ENCODE measurements at regions of chr1 and their contacts with region 1.

Region 1: DNA sequence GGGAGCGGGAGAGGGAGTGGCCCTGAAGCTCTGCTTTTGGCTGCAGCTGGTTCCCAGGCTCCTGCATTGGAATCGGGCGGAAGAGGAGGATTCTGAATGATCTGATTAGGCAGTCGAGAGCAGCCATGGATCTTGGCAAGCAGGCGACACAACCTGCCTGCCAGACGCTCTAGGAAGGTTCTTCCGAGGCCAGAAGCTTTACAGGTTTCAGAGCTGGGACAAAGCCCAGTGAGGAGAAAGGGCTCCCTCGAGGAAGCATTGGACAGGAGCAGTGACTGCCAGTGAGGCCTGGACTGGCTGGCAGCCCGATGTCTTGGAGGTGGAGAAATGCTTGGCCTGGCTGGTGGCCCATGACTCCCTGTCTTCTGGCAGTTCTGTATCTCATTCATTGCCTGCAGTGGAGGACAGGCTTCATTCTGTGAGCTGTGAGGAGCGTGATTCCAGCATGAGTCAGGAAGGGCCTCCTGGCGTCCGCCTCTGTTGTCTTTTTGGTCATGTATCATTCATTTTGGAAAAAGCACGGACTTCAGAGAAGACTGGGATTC is 132.7 kb upstream of the IPO9 start:
- DNase-seq: peak; percentile 76
- H3K4me3 ChIP-seq: no peak overlapping the region
- H3K27ac ChIP-seq: peak overlapping the region; percentile 97
- H3K4me1 ChIP-seq: peaks cover 56 to 67% of the 10 kb centered on the region in 2 experiments
- H3K27me3 ChIP-seq: no peaks in the 10 kb centered on the region
- CTCF ChIP-seq: no peak
- EP300 ChIP-seq: peak; percentile 66 to 70; a peak in 2 of 4 replicates
- RAD21 ChIP-seq: no peak

Region 2: DNA sequence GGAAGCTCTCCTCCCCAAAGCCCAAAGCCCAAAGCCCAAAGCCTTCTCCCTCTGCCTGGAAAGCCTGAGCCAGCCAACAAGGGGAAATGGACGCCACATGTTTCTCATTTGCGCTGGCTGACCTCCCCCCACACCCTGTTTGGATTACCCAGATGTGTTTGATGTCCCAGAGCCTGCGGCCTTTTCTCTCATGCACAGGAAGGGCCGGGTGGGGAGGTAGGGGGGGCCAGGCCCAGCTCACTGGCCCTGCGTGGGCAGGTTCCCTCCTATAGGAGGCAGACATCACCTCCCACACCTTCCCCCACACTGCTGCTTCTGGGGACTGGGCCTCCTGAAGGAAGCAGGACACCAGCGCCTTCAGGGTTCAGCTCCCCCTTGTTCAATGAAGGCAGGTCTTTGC is 41.0 kb before region 1 on chr1:
- CTCF ChIA-PET with region 1: interaction called, 20 read pairs
- POLR2A ChIA-PET with region 1: interaction called, 8 read pairs
- DNase-seq: peak; percentile 95
- H3K4me3 ChIP-seq: no peak overlapping the region; a peak in 1 of 4 replicates
- H3K27ac ChIP-seq: peak overlapping the region; percentile 63 to 94
- H3K4me1 ChIP-seq: peaks cover 58 to 61% of the 10 kb centered on the region in 2 experiments
- H3K27me3 ChIP-seq: no peaks in the 10 kb centered on the region
- CTCF ChIP-seq: peak; percentile 38
- EP300 ChIP-seq: peak; percentile 41 to 89; a peak in 3 of 4 replicates
- RAD21 ChIP-seq: peak; percentile 51

Region 3: DNA sequence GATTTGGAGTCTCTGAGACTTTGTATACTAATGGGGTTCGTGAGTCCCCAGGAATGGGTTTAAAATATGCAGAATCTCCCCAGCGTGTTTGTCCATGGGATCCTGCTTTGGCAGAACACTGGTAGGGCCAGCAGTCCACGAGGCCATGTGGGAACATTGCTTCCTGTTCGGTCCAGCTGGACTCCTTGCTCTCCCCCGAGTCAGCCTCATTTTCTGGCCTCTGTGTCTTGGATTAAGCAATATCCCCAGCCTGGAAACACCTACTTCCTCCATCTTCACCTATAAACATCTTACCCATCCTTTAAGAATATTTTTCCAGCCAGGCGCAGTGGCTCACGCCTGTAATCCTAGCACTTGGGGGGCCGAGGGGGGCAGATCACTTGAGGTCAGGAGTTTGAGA is 14.9 kb before region 1 on chr1:
- CTCF ChIA-PET with region 1: no interaction called
- POLR2A ChIA-PET with region 1: no interaction called
- DNase-seq: no peak
- H3K4me3 ChIP-seq: no peak overlapping the region
- H3K27ac ChIP-seq: no peak overlapping the region
- H3K4me1 ChIP-seq: peaks cover 8 to 18% of the 10 kb centered on the region in 2 experiments; a peak in 3 of 4 replicates
- H3K27me3 ChIP-seq: no peaks in the 10 kb centered on the region
- CTCF ChIP-seq: no peak
- EP300 ChIP-seq: no peak
- RAD21 ChIP-seq: no peak

Measured in SK-N-SH (cell line).